Caco-2 (cell line): ENCODE measurements at regions of chr20 and their contacts with region 1.

Region 1: GRCh38 chr20:51541189-51542032 is 1.1 kb downstream of the NFATC2 start:
- DNase-seq: peak; percentile 82 to 89
- H3K4me3 ChIP-seq: peak overlapping the region; percentile 44
- H3K4me3 Mint-ChIP-seq: peak overlapping the region; percentile 76
- H3K27ac Mint-ChIP-seq: peak overlapping the region; percentile 26
- H3K4me1 ChIP-seq: peaks cover 29% of the 10 kb centered on the region
- H3K4me1 Mint-ChIP-seq: peaks cover 18% of the 10 kb centered on the region
- H3K27me3 ChIP-seq: no peaks in the 10 kb centered on the region
- H3K27me3 Mint-ChIP-seq: peaks cover 7% of the 10 kb centered on the region
- CTCF ChIP-seq: peak in 1 of 2 experiments; percentile 17

Region 2: GRCh38 chr20:51372176-51372803 is 169.1 kb before region 1 on chr20:
- CTCF ChIA-PET with region 1: interaction called, 3 read pairs
- POLR2A ChIA-PET with region 1: no interaction called
- intact Hi-C with region 1: loop called (anchors 5 kb)
- DNase-seq: peak; percentile 88 to 92
- H3K4me3 ChIP-seq: no peak overlapping the region
- H3K4me3 Mint-ChIP-seq: no peak overlapping the region
- H3K27ac Mint-ChIP-seq: no peak overlapping the region
- H3K4me1 ChIP-seq: peaks cover 14% of the 10 kb centered on the region
- H3K4me1 Mint-ChIP-seq: peaks cover 12% of the 10 kb centered on the region
- H3K27me3 ChIP-seq: no peaks in the 10 kb centered on the region
- H3K27me3 Mint-ChIP-seq: peaks cover 6% of the 10 kb centered on the region
- CTCF ChIP-seq: peak; percentile 99

Region 3: DNA sequence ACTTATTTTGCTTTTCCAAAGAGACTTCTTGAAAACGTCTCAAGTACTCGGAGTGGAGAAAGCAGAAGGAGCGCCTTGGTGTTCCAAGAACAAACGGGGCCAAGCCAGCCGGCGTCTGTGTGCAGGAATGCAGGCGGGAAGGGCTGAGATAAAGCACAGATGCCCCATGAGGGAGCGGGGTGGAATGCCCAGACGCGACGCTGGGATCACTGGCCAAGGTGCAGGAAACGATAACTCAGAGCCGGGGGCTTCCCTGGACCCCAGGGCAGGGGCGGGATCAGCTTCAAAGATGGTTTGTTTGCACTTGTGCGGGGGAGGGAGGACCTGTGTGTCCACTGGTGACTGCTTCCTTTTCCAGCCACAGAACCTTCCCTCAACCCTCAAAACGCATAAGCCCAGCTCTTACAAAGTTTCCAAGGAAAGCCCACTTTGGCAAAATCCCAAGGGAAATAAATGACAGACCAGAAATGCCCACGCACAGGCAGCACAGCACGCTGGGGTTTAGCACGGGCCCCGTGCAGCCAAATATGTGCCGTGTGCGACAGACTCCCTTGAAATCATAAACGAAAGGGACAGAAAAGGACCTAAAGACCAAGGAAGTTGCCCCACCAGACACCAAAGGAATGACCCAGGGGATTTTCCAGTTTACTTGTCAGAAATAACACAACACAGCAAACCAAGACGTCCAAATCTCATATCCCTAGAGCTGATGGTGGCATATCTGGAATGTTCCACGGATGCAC is 112.8 kb before region 1 on chr20:
- CTCF ChIA-PET with region 1: interaction called, 5 read pairs
- POLR2A ChIA-PET with region 1: no interaction called
- intact Hi-C with region 1: loop called (anchors 5 kb)
- DNase-seq: peak; percentile 76 to 89
- H3K4me3 ChIP-seq: no peak overlapping the region
- H3K4me3 Mint-ChIP-seq: peak overlapping the region; percentile 3
- H3K27ac Mint-ChIP-seq: peak overlapping the region; percentile 40
- H3K4me1 ChIP-seq: peaks cover 46% of the 10 kb centered on the region
- H3K4me1 Mint-ChIP-seq: peaks cover 27% of the 10 kb centered on the region
- H3K27me3 ChIP-seq: no peaks in the 10 kb centered on the region
- H3K27me3 Mint-ChIP-seq: no peaks in the 10 kb centered on the region
- CTCF ChIP-seq: no peak

Region 4: DNA sequence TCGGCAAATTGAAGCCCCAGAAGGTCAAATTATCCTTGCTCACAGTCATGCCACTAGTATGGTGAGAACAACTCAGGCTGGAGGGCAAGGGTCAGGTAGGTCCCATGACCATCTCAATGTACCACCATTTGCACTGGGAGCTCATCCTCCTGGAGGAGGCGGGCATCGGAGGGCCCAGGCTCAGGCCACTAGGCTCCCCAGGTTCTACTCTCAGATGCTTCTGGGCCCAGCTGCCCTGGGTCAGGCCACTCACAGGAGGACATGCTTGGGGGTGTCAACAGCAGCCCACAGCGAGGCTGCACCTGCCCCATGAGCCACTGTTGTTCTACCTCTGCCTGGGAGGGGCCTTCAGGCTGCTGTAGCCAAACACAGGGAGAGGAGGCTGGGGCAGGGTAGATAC is 38.0 kb before region 1 on chr20:
- CTCF ChIA-PET with region 1: interaction called, 5 read pairs
- POLR2A ChIA-PET with region 1: no interaction called
- intact Hi-C with region 1: loop called (anchors 2 kb)
- DNase-seq: no peak
- H3K4me3 ChIP-seq: no peak overlapping the region
- H3K4me3 Mint-ChIP-seq: no peak overlapping the region
- H3K27ac Mint-ChIP-seq: no peak overlapping the region
- H3K4me1 ChIP-seq: peaks cover 11% of the 10 kb centered on the region
- H3K4me1 Mint-ChIP-seq: peaks cover 8% of the 10 kb centered on the region
- H3K27me3 ChIP-seq: no peaks in the 10 kb centered on the region
- H3K27me3 Mint-ChIP-seq: no peaks in the 10 kb centered on the region
- CTCF ChIP-seq: no peak

Region 5: DNA sequence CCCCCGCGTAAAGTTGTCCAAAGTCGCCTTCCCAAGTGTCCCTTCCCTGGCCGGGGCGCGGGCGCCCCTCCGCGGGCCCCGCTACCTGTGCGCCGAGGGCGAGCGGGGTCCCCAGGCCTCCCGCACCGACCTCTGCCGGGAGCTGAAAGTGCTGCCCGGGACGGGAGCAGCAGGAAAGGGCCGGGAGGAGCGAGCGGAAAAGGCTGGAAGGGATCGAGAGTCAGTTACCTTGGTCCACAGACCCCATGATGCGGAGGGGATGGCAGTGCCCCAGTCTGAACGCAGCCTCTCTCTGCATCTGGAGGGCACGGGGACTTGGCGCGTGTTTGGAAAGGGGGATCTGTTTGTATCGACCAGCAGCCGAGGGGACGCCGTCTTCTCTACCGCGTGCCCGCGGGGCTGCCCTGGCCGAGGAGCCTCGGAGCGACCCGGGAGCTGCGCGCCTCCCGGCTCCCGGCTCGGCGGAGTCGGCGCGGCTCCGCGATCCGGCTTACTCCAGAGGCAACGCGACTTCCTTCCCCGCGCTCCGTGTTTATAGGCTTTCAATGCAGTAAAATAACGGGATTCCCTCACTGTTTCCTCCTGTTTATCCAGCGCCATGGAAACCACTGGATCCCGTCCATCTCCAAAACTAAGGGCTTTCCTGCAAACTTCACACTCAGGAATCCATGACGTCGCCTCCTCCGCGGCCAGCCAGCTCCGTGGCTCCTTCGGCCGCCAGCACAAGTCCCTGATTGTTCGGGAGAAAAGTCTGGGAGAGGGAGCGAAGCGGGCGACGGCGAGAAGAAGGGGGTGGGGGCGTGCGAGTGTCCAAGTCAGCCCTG is 21.1 kb after region 1 on chr20:
- CTCF ChIA-PET with region 1: interaction called, 7 read pairs
- POLR2A ChIA-PET with region 1: interaction called, 9 read pairs
- intact Hi-C with region 1: loop called (anchors 1 kb)
- DNase-seq: peak; percentile 78 to 83
- H3K4me3 ChIP-seq: peak overlapping the region; percentile 36
- H3K4me3 Mint-ChIP-seq: peak overlapping the region; percentile 88
- H3K27ac Mint-ChIP-seq: peak overlapping the region; percentile 71
- H3K4me1 ChIP-seq: peaks cover 28% of the 10 kb centered on the region
- H3K4me1 Mint-ChIP-seq: peaks cover 37% of the 10 kb centered on the region
- H3K27me3 ChIP-seq: peaks cover 8% of the 10 kb centered on the region
- H3K27me3 Mint-ChIP-seq: peaks cover 25% of the 10 kb centered on the region
- CTCF ChIP-seq: peak; percentile 24 to 63

Region 6: DNA sequence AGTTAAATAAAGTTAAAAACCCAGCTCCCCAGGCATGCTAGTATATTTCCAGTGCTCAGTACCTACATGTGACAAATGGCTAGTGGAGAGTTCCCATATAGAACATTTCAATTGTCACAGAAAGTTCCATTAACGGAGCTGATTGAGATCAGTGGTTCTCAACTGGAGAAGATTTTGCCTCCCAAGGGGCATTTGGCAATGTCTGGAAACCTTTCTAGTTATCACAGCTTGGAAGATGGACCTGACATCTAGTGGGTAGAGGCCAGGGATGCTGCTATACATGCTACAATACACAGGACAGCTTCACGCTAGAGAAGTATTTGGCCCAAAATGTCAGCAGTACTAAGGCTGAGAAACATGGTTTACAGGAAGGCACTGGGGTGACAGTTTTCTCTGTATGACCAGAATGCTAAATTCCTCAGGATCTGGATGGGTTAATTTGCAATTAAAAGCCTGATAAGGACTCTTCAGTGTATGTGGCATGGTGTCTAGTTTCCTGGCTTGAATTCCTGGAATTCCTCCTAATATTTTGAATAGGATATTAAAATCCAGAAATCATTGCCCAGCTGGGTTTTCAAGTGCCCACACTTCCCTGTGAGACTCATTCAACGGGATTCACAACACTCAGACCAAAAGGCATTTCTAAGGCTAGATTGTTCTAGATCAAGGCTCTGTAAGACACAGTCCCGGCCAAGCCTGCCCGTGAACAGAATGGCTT is 345.6 kb after region 1 on chr20:
- CTCF ChIA-PET with region 1: no interaction called
- POLR2A ChIA-PET with region 1: no interaction called
- intact Hi-C with region 1: no loop called
- DNase-seq: no peak
- H3K4me3 ChIP-seq: no peak overlapping the region
- H3K4me3 Mint-ChIP-seq: no peak overlapping the region
- H3K27ac Mint-ChIP-seq: peak overlapping the region; percentile 17
- H3K4me1 ChIP-seq: peaks cover 38% of the 10 kb centered on the region
- H3K4me1 Mint-ChIP-seq: peaks cover 36% of the 10 kb centered on the region
- H3K27me3 ChIP-seq: no peaks in the 10 kb centered on the region
- H3K27me3 Mint-ChIP-seq: no peaks in the 10 kb centered on the region
- CTCF ChIP-seq: no peak